ENCODE measurements at regions of chr20 and their contacts with region 1.

Region 1: DNA sequence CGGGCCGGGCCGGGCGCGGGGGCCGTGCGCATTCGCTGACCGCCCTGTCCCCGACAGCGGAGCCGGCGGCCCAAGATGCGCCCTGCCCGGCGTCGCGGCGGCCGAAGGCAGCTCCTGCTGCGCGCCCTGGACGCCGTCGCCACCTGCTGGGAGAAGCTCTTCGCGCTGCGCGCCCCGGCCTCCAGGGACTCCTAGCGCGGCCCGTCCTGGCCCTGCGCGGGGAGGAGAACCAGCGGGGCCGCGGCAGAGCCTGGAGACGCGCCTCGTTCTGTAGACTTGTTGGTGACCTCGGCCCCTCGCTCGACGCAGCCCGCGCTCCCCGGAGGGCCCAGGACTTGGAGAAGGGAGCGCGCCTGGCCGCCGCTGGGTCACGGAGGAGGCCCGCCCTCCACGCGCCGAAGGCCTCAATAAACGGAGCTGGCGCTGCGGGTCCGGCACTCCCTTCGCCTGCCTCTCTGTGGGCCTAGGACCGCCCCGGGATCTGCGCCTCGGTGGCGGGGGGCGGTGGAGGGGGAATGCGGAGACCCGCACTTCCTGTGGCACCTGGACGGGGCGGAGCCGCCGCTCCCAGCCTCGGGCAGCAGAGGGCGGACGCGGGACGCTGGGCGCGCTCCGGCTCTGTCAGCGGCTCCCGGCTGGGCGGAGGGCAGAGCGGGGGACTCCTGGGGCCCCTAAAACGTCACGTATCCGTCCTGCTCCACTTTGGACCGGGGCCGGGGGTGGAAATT is 2.7 kb downstream of the C20orf204 start:
- DNase-seq: peak; percentile 82
- ATAC-seq: peak; percentile 75

Region 2: GRCh38 chr20:64119681-64120341 is 81.1 kb after region 1 on chr20:
- intact Hi-C with region 1: loop called (anchors 5 kb)
- DNase-seq: peak; percentile 45
- ATAC-seq: peak; percentile 46

Region 3: GRCh38 chr20:64161356-64162238 is 122.9 kb after region 1 on chr20:
- intact Hi-C with region 1: no loop called
- DNase-seq: no peak
- ATAC-seq: peak; percentile 55

Measured in sciatic nerve (tissue), 2 donors.